Left lung (tissue), 14 donors: ENCODE measurements at regions of chr13 and their contacts with region 1.

Region 1: GRCh38 chr13:95624020-95624419 is 20.5 kb downstream of the DZIP1 start:
- DNase-seq: peak in 2 of 4 donors; percentile 49 to 75
- ATAC-seq: peak; percentile 84
- H3K4me3 ChIP-seq: no peak overlapping the region
- H3K27ac ChIP-seq: no peak overlapping the region
- H3K4me1 ChIP-seq: no peaks in the 10 kb centered on the region
- H3K27me3 ChIP-seq: no peaks in the 10 kb centered on the region
- CTCF ChIP-seq: peak in 1 of 2 donors; percentile 54

Region 2: GRCh38 chr13:95834134-95834765 is 210.2 kb after region 1 on chr13:
- intact Hi-C with region 1: loop called in 1 of 2 experiments (anchors 5 kb)
- DNase-seq: peak; percentile 43 to 82 (median 62)
- ATAC-seq: peak; percentile 100
- H3K4me3 ChIP-seq: no peak overlapping the region
- H3K27ac ChIP-seq: no peak overlapping the region
- H3K4me1 ChIP-seq: peaks cover 4 to 6% of the 10 kb centered on the region in 2 donors
- H3K27me3 ChIP-seq: no peaks in the 10 kb centered on the region
- CTCF ChIP-seq: peak; percentile 91

Region 3: GRCh38 chr13:96089749-96090239 is 465.8 kb after region 1 on chr13 and contains the start of gene HS6ST3:
- intact Hi-C with region 1: no loop called
- DNase-seq: peak in 3 of 4 donors; percentile 13 to 75 (median 34)
- ATAC-seq: peak; percentile 84
- H3K4me3 ChIP-seq: peak within 1 kb of the TSS; percentile 24 to 30
- H3K27ac ChIP-seq: no peak within 1 kb of the TSS
- H3K4me1 ChIP-seq: peaks cover 5 to 13% of the 10 kb centered on the region in 2 donors
- H3K27me3 ChIP-seq: peaks cover 54 to 90% of the 10 kb centered on the region in 2 donors
- CTCF ChIP-seq: no peak
- polyA plus RNA-seq, gene HS6ST3: 0.04 to 0.14 (median 0.10) TPM